Calu3 (cell line): ENCODE measurements at regions of chr12 and their contacts with region 1.

Region 1: GRCh38 chr12:32399337-32400113 is at the start of gene FGD4:
- DNase-seq: peak; percentile 89
- H3K4me3 Mint-ChIP-seq: peak within 1 kb of the TSS; percentile 98
- H3K27ac Mint-ChIP-seq: peak within 1 kb of the TSS; percentile 91
- H3K4me1 Mint-ChIP-seq: peaks cover 7% of the 10 kb centered on the region
- H3K27me3 Mint-ChIP-seq: no peaks in the 10 kb centered on the region
- CTCF ChIP-seq: peak; percentile 38
- total RNA-seq, gene FGD4: 37.4 and 38.6 TPM in 2 replicates

Region 2: GRCh38 chr12:32423559-32423958 is 24.0 kb after region 1 on chr12:
- CTCF ChIA-PET with region 1: no interaction called
- intact Hi-C with region 1: no loop called
- DNase-seq: no peak
- H3K4me3 Mint-ChIP-seq: no peak overlapping the region
- H3K27ac Mint-ChIP-seq: no peak overlapping the region
- H3K4me1 Mint-ChIP-seq: peaks cover 22% of the 10 kb centered on the region
- H3K27me3 Mint-ChIP-seq: no peaks in the 10 kb centered on the region
- CTCF ChIP-seq: no peak

Region 3: GRCh38 chr12:32437764-32438163 is 38.2 kb after region 1 on chr12:
- CTCF ChIA-PET with region 1: no interaction called
- intact Hi-C with region 1: loop called (anchors 1 kb)
- DNase-seq: no peak
- H3K4me3 Mint-ChIP-seq: no peak overlapping the region
- H3K27ac Mint-ChIP-seq: no peak overlapping the region
- H3K4me1 Mint-ChIP-seq: peaks cover 60% of the 10 kb centered on the region
- H3K27me3 Mint-ChIP-seq: no peaks in the 10 kb centered on the region
- CTCF ChIP-seq: no peak

Region 4: GRCh38 chr12:32444895-32445294 is 45.4 kb after region 1 on chr12:
- CTCF ChIA-PET with region 1: interaction called, 6 read pairs
- intact Hi-C with region 1: loop called (anchors 2 kb)
- DNase-seq: peak; percentile 74
- H3K4me3 Mint-ChIP-seq: no peak overlapping the region
- H3K27ac Mint-ChIP-seq: peak overlapping the region; percentile 69
- H3K4me1 Mint-ChIP-seq: peaks cover 76% of the 10 kb centered on the region
- H3K27me3 Mint-ChIP-seq: no peaks in the 10 kb centered on the region
- CTCF ChIP-seq: no peak

Region 5: GRCh38 chr12:32541851-32542258 is 142.3 kb after region 1 on chr12:
- CTCF ChIA-PET with region 1: interaction called, 10 read pairs
- intact Hi-C with region 1: no loop called
- DNase-seq: no peak
- H3K4me3 Mint-ChIP-seq: no peak overlapping the region
- H3K27ac Mint-ChIP-seq: peak overlapping the region; percentile 38
- H3K4me1 Mint-ChIP-seq: peaks cover 62% of the 10 kb centered on the region
- H3K27me3 Mint-ChIP-seq: no peaks in the 10 kb centered on the region
- CTCF ChIP-seq: no peak